Activated naive CD4-positive, alpha-beta T cell treated with anti-CD3 and anti-CD28 coated beads for 36 hours (primary cell): ENCODE measurements at regions of chr7 and their contacts with region 1.

Region 1: GRCh38 chr7:104923010-104923421 is 91.0 kb upstream of the KMT2E start:
- DNase-seq: peak; percentile 90
- H3K4me3 Mint-ChIP-seq: no peak overlapping the region
- H3K27ac Mint-ChIP-seq: peak overlapping the region; percentile 61
- H3K4me1 Mint-ChIP-seq: peaks cover 4% of the 10 kb centered on the region
- H3K27me3 Mint-ChIP-seq: no peaks in the 10 kb centered on the region

Region 2: GRCh38 chr7:103573479-103574058 is 1349.4 kb before region 1 on chr7:
- CTCF ChIA-PET with region 1: no interaction called
- intact Hi-C with region 1: loop called (anchors 5 kb)
- DNase-seq: no peak
- H3K4me3 Mint-ChIP-seq: no peak overlapping the region
- H3K27ac Mint-ChIP-seq: no peak overlapping the region
- H3K4me1 Mint-ChIP-seq: no peaks in the 10 kb centered on the region
- H3K27me3 Mint-ChIP-seq: peaks cover 2% of the 10 kb centered on the region

Region 3: GRCh38 chr7:104604706-104605105 is 318.3 kb before region 1 on chr7:
- CTCF ChIA-PET with region 1: no interaction called
- intact Hi-C with region 1: no loop called
- DNase-seq: no peak
- H3K4me3 Mint-ChIP-seq: no peak overlapping the region
- H3K27ac Mint-ChIP-seq: no peak overlapping the region
- H3K4me1 Mint-ChIP-seq: no peaks in the 10 kb centered on the region
- H3K27me3 Mint-ChIP-seq: no peaks in the 10 kb centered on the region

Region 4: GRCh38 chr7:104643587-104644217 is 279.3 kb before region 1 on chr7:
- CTCF ChIA-PET with region 1: interaction called, 7 read pairs
- intact Hi-C with region 1: loop called (anchors 1 kb)
- DNase-seq: peak; percentile 12
- H3K4me3 Mint-ChIP-seq: no peak overlapping the region
- H3K27ac Mint-ChIP-seq: no peak overlapping the region
- H3K4me1 Mint-ChIP-seq: no peaks in the 10 kb centered on the region
- H3K27me3 Mint-ChIP-seq: peaks cover 19% of the 10 kb centered on the region

Region 5: GRCh38 chr7:104883718-104884452 is 39.1 kb before region 1 on chr7:
- CTCF ChIA-PET with region 1: interaction called, 123 read pairs
- intact Hi-C with region 1: loop called (anchors 1 kb)
- DNase-seq: peak; percentile 89
- H3K4me3 Mint-ChIP-seq: no peak overlapping the region
- H3K27ac Mint-ChIP-seq: no peak overlapping the region
- H3K4me1 Mint-ChIP-seq: peaks cover 9% of the 10 kb centered on the region
- H3K27me3 Mint-ChIP-seq: no peaks in the 10 kb centered on the region

Region 6: GRCh38 chr7:105055621-105056020 is 132.6 kb after region 1 on chr7:
- CTCF ChIA-PET with region 1: interaction called, 3 read pairs
- intact Hi-C with region 1: loop called (anchors 5 kb)
- DNase-seq: no peak
- H3K4me3 Mint-ChIP-seq: no peak overlapping the region
- H3K27ac Mint-ChIP-seq: peak overlapping the region; percentile 43
- H3K4me1 Mint-ChIP-seq: peaks cover 62% of the 10 kb centered on the region
- H3K27me3 Mint-ChIP-seq: no peaks in the 10 kb centered on the region

Region 7: DNA sequence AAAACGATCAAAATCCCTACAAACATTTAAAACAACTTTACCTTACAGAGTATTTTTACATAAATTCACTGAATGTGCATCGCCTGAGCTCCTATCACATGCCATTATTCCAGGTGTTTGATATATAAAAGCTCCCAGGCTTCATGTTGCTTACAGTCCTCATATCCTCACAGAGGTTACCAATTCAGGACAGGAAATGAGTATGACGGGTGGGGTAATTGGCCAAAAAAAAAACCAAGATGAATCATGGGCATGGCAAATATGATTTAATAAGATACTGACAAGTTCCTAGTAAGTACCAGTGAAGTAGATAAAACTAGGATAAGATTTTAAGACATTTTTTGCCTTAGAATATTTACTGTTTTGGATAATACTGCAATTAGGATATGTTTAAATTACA is 226.8 kb after region 1 on chr7:
- CTCF ChIA-PET with region 1: no interaction called
- intact Hi-C with region 1: loop called (anchors 5 kb)
- DNase-seq: no peak
- H3K4me3 Mint-ChIP-seq: no peak overlapping the region
- H3K27ac Mint-ChIP-seq: no peak overlapping the region
- H3K4me1 Mint-ChIP-seq: peaks cover 4% of the 10 kb centered on the region
- H3K27me3 Mint-ChIP-seq: no peaks in the 10 kb centered on the region

Region 8: DNA sequence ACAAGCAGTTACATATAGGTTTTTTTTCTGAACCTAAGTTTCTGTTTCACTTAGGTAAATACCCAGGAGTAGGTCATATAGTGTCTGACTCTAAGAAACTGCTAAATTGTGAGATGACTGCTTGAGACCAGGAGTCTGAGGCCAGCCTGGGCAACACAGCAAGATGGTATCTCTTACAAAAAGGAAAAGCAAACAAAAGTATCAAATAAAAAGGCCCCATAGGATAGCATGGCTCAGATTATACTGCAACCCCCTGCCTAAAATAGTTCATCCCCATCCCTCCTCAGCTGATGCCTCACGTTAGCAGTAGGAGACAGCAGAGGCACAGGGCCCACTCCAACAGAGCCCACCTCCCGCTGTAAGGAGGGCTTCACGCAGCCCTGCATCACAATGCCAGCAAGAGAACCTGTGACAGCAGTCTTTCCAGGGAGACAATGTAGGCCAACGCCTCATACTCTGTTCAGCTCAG is 375.5 kb after region 1 on chr7:
- CTCF ChIA-PET with region 1: no interaction called
- intact Hi-C with region 1: no loop called
- DNase-seq: peak; percentile 55
- H3K4me3 Mint-ChIP-seq: peak overlapping the region; percentile 33
- H3K27ac Mint-ChIP-seq: peak overlapping the region; percentile 44
- H3K4me1 Mint-ChIP-seq: peaks cover 51% of the 10 kb centered on the region
- H3K27me3 Mint-ChIP-seq: no peaks in the 10 kb centered on the region

Region 9: DNA sequence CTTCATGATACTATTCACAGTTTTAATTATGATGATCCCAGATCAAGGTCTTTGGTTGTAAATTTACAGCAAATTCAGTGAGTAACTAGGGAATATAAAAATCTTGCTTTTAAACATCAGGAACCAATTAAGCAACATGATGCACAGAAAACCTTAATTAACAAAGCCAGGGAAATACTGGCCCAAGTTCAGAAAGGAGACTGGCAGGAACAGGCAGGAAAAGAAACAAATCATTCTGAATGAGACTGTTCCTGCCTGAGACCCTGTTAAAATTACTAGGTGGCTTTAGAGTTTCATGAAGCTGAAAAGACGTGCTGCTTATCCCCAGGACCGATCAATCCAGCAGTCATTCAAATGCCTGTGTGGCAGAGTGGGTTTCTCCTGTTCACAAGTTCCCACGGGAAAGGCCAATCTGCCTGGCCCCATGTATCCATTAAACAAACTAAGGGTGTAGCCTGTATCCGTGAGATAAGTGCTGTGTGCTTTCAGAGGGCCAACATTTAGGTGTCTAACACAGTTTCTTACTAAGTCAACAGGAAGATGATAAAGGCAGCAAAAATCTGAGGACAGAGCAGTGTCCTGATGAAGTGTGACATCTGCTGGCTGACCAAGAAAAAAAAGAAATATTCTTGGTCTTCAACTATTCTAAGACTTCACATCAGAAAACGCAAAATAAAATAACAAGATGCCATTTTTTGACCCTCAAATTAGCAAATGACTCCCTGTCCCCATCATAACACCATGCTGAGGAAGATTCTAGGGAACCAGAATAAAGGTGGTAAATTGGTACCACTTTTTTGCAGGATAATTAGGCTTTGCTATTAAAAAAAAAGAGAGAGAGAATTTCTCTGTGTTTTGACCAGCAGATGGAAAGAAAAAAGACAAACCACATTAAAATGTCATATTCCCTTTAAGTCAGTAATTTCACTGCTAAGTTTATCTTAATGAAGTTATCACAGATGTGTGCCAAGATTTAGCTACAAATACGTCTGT is 564.9 kb after region 1 on chr7:
- CTCF ChIA-PET with region 1: no interaction called
- intact Hi-C with region 1: loop called (anchors 1 kb)
- DNase-seq: no peak
- H3K4me3 Mint-ChIP-seq: no peak overlapping the region
- H3K27ac Mint-ChIP-seq: no peak overlapping the region
- H3K4me1 Mint-ChIP-seq: no peaks in the 10 kb centered on the region
- H3K27me3 Mint-ChIP-seq: no peaks in the 10 kb centered on the region